ENCODE measurements at regions of chr5 and their contacts with region 1.

Region 1: DNA sequence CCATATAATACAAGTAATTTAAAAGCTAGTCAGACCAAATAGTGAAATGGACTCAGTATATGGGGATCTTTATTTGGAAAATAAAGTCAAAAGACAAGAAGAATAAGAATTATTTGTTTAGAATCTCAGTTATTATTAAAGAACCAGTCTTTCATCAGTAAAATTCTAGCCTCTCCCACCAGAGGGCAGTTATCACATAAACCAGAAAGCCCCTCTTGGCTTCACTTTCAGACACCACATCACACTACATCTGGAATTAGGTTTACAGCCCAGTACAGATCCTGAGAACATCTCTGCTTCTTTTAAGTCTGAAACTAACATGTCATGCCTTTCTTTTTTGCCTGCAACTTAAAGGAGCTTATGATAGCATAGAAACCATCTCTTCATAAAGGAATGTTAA is 12.2 kb upstream of the HSPB3 start:
- DNase-seq: peak; percentile 21
- H3K4me3 Mint-ChIP-seq: no peak overlapping the region
- H3K27ac Mint-ChIP-seq: no peak overlapping the region
- H3K4me1 Mint-ChIP-seq: no peaks in the 10 kb centered on the region
- H3K27me3 Mint-ChIP-seq: peaks cover 25% of the 10 kb centered on the region
- CTCF ChIP-seq: peak; percentile 22

Region 2: GRCh38 chr5:54492178-54492577 is 48.9 kb after region 1 on chr5:
- CTCF ChIA-PET with region 1: interaction called, 4 read pairs
- intact Hi-C with region 1: loop called (anchors 1 kb)
- DNase-seq: no peak
- H3K4me3 Mint-ChIP-seq: no peak overlapping the region
- H3K27ac Mint-ChIP-seq: no peak overlapping the region
- H3K4me1 Mint-ChIP-seq: no peaks in the 10 kb centered on the region
- H3K27me3 Mint-ChIP-seq: peaks cover 47% of the 10 kb centered on the region
- CTCF ChIP-seq: no peak

Region 3: GRCh38 chr5:54867310-54867944 is 424.2 kb after region 1 on chr5:
- CTCF ChIA-PET with region 1: no interaction called
- intact Hi-C with region 1: loop called (anchors 2 kb)
- DNase-seq: no peak
- H3K4me3 Mint-ChIP-seq: no peak overlapping the region
- H3K27ac Mint-ChIP-seq: no peak overlapping the region
- H3K4me1 Mint-ChIP-seq: peaks cover 2% of the 10 kb centered on the region
- H3K27me3 Mint-ChIP-seq: peaks cover 46% of the 10 kb centered on the region
- CTCF ChIP-seq: peak; percentile 41

Region 4: GRCh38 chr5:54895816-54896341 is 452.6 kb after region 1 on chr5:
- CTCF ChIA-PET with region 1: no interaction called
- intact Hi-C with region 1: loop called (anchors 1 kb)
- DNase-seq: peak; percentile 34
- H3K4me3 Mint-ChIP-seq: peak overlapping the region; percentile 21
- H3K27ac Mint-ChIP-seq: no peak overlapping the region
- H3K4me1 Mint-ChIP-seq: peaks cover 8% of the 10 kb centered on the region
- H3K27me3 Mint-ChIP-seq: peaks cover 51% of the 10 kb centered on the region
- CTCF ChIP-seq: peak; percentile 35

Measured in Calu3 (cell line).